Endothelial cell of umbilical vein (primary cell): ENCODE measurements at regions of chr6 and their contacts with region 1.

Region 1: DNA sequence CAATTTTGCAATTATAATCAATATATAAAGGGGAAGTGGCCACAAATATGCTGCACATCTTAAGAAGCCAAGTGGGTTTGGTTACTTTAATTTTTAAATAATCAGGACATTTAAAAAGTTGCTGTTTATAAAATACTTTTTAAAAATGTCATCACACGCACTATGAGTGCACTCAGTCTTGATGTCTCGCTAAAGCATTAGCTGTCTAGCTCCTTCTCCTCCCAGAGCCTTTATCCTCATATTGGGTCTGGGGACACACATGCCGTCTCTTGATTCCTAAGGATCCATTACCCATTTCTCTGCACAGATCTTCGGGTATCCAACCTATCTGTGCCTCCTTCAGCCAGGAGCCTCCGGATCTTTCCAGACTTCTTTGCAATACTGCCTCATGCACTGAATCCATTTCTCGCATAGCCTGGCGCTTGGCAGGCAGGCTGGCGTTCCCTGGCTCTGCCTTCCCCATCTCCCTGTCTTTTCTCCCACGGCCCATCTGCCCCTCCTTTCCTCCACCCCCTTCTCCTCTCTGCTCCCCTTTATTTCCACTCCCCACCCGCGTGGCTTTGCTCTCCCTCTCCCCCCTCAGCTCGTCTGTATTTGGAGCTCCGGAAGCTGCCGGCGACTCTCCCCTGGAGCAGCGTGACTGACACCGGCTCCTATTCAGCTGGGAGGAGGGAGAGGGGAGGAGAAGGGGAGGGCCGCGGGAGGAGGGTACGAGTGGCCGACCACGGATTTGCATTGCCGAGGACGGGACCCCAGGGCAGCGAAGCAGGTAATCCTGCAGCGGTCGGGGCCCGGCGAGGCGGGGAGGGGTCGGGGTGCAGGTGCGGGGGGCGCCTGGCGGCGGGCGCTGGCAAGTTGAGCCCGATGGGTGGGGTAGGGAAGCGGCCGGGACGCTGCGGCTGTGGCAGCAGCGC is at the start of gene CAP2:
- DNase-seq: peak; percentile 48
- H3K4me3 ChIP-seq: peak within 1 kb of the TSS; percentile 66 to 94 (median 73)
- H3K27ac ChIP-seq: peak within 1 kb of the TSS; percentile 42
- H3K4me1 ChIP-seq: peaks cover 11% of the 10 kb centered on the region
- H3K27me3 ChIP-seq: no peaks in the 10 kb centered on the region
- CTCF ChIP-seq: no peak
- POLR2A ChIP-seq: no peak
- total RNA-seq, gene CAP2: 18.0 and 21.3 TPM in 2 replicates

Region 2: GRCh38 chr6:16372029-16372776 is 1021.0 kb before region 1 on chr6:
- CTCF ChIA-PET with region 1: no interaction called
- POLR2A ChIA-PET with region 1: no interaction called
- dilution Hi-C with region 1: no loop called
- intact Hi-C with region 1: no loop called
- DNase-seq: peak; percentile 65
- H3K4me3 ChIP-seq: no peak overlapping the region
- H3K27ac ChIP-seq: no peak overlapping the region
- H3K4me1 ChIP-seq: peaks cover 7% of the 10 kb centered on the region
- H3K27me3 ChIP-seq: no peaks in the 10 kb centered on the region
- CTCF ChIP-seq: no peak
- POLR2A ChIP-seq: no peak

Region 3: DNA sequence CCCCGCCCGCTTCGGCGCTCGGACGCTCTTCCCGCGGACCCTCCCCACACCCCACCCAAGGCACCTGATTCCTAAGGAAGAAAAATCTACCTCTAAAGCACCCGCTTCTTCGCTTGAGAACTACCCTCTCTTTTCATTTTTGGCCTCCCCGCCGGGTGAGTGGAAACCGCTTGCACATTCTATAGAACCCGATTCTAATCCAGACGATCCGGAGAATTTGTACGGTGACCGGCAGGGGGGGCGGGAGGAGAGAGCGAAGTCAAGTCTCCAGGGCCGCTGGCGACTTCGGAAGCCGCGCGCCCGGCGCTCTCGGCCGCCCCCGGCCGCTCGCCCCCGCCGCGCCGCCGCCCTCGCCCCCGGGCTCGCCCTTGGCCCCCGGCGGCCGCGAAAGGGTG is 112.1 kb before region 1 on chr6 and contains the start of gene RBM24:
- CTCF ChIA-PET with region 1: no interaction called
- POLR2A ChIA-PET with region 1: no interaction called
- dilution Hi-C with region 1: no loop called
- intact Hi-C with region 1: loop called (anchors 5 kb)
- DNase-seq: peak; percentile 57
- H3K4me3 ChIP-seq: peak within 1 kb of the TSS; percentile 49 to 80 (median 66)
- H3K27ac ChIP-seq: no peak within 1 kb of the TSS
- H3K4me1 ChIP-seq: peaks cover 15% of the 10 kb centered on the region
- H3K27me3 ChIP-seq: no peaks in the 10 kb centered on the region
- CTCF ChIP-seq: peak; percentile 14 to 54
- POLR2A ChIP-seq: no peak
- total RNA-seq, gene RBM24: 6.0 and 6.7 TPM in 2 replicates

Region 4: GRCh38 chr6:17417817-17418216 is 24.6 kb after region 1 on chr6:
- CTCF ChIA-PET with region 1: no interaction called
- POLR2A ChIA-PET with region 1: no interaction called
- dilution Hi-C with region 1: no loop called
- intact Hi-C with region 1: loop called (anchors 2 kb)
- DNase-seq: no peak
- H3K4me3 ChIP-seq: no peak overlapping the region
- H3K27ac ChIP-seq: no peak overlapping the region
- H3K4me1 ChIP-seq: peaks cover 7% of the 10 kb centered on the region
- H3K27me3 ChIP-seq: no peaks in the 10 kb centered on the region
- CTCF ChIP-seq: no peak
- POLR2A ChIP-seq: no peak

Region 5: DNA sequence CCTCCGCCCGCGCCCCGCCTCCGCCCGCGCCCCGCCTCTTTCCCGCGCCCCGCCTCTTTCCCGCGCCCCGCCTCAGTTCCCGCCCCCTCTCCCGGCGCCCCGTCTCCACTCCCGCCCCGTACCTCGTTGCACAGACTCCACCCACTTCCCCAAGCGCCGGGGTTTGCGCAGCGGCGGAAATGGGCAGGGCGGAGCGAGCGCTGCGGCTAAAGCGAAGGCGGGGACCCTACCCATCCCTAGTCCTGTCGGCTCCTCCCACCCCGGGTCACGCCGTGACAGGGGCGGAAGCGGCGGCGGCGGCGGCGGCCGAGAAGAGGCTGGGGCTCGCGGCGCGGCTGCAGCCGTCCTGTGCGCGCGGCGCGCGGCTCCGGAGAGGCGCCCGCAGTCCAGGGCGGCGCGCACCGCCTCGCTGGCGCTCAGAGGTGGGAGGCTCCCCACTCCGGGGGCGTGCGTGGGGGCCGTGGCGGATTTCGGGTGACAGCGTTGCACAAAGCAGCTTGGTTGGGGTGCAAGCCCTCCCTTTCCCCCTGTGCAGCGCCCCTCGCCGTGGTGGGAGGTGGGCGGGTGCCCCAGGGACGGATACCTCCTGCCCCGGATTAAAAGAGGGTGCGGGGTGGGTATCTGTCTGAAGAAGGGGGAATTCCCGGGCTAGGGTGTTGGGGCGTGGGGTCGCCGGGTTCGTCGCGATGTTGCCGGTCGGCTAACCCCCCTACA is 762.1 kb after region 1 on chr6 and contains the start of gene KDM1B:
- CTCF ChIA-PET with region 1: no interaction called
- POLR2A ChIA-PET with region 1: no interaction called
- dilution Hi-C with region 1: no loop called
- intact Hi-C with region 1: loop called (anchors 1 kb)
- DNase-seq: peak; percentile 98
- H3K4me3 ChIP-seq: peak within 1 kb of the TSS; percentile 91 to 95 (median 92)
- H3K27ac ChIP-seq: peak within 1 kb of the TSS; percentile 71
- H3K4me1 ChIP-seq: peaks cover 19% of the 10 kb centered on the region
- H3K27me3 ChIP-seq: no peaks in the 10 kb centered on the region
- CTCF ChIP-seq: no peak
- POLR2A ChIP-seq: no peak
- total RNA-seq, gene KDM1B: 9.6 and 10.8 TPM in 2 replicates